ENCODE measurements at regions of chr12 and their contacts with region 1.

Region 1: DNA sequence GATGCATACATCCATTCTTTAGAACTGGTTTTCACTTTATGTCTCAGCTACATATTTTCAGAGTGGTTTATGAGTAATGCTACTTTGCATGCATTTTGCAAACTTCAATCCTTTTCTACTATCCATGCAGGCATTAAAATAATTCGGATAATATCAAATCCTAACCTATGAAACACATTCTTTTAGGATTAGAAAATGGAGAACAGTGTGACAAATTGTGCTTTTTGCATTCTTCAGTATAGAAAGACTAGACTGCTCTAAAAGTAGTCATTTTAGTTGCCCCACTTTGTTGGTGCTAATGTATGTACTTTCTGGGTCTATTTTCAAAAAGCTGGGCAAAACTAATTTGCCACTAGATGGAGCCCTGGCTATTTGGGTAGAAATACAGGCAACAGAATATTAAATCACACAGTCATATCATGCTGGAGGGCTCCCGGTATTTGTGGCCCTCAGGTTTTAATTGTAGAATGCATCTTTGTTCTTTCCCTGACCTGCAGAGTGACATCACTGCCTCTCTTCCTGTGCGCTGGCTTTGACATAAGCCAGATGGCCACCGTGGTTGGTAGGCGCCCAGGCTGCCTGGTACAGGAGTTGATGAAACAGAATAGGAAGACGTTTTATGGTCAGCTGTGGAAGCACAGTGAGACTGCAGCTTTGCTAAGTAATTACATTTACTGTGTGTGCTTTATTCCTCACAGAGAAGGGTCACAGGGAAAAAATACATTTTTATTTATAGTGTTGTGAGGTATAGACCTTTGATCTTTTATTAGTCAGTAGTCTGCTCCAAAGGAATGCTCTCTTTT is 28.1 kb downstream of the MSRB3 start:
- DNase-seq: peak in 2 of 4 experiments; percentile 17 to 43
- ATAC-seq: peak; percentile 69; the same call in 2 of the 3 replicates
- H3K4me3 ChIP-seq: no peak overlapping the region
- H3K27ac ChIP-seq: no peak overlapping the region
- H3K4me1 ChIP-seq: no peaks in the 10 kb centered on the region
- H3K27me3 ChIP-seq: no peaks in the 10 kb centered on the region
- CTCF ChIP-seq: peak; percentile 58 to 73 (median 63); a peak in 5 of 6 replicates
- EP300 ChIP-seq: no peak
- POLR2A ChIP-seq: no peak
- RAD21 ChIP-seq: peak; percentile 76 to 82

Region 2: GRCh38 chr12:65384240-65384639 is 77.7 kb after region 1 on chr12:
- CTCF ChIA-PET with region 1: no interaction called
- POLR2A ChIA-PET with region 1: no interaction called
- in situ Hi-C with region 1: no loop called
- intact Hi-C with region 1: no loop called
- DNase-seq: no peak
- ATAC-seq: no peak
- H3K4me3 ChIP-seq: no peak overlapping the region
- H3K27ac ChIP-seq: no peak overlapping the region
- H3K4me1 ChIP-seq: no peaks in the 10 kb centered on the region
- H3K27me3 ChIP-seq: no peaks in the 10 kb centered on the region
- CTCF ChIP-seq: no peak
- EP300 ChIP-seq: no peak
- POLR2A ChIP-seq: no peak
- RAD21 ChIP-seq: no peak

Region 3: GRCh38 chr12:65986047-65986446 is 679.5 kb after region 1 on chr12:
- CTCF ChIA-PET with region 1: no interaction called
- POLR2A ChIA-PET with region 1: no interaction called
- in situ Hi-C with region 1: no loop called
- intact Hi-C with region 1: loop called (anchors 10 kb)
- DNase-seq: no peak
- ATAC-seq: no peak
- H3K4me3 ChIP-seq: no peak overlapping the region
- H3K27ac ChIP-seq: no peak overlapping the region
- H3K4me1 ChIP-seq: no peaks in the 10 kb centered on the region
- H3K27me3 ChIP-seq: no peaks in the 10 kb centered on the region
- CTCF ChIP-seq: no peak
- EP300 ChIP-seq: no peak
- POLR2A ChIP-seq: no peak
- RAD21 ChIP-seq: no peak

Region 4: DNA sequence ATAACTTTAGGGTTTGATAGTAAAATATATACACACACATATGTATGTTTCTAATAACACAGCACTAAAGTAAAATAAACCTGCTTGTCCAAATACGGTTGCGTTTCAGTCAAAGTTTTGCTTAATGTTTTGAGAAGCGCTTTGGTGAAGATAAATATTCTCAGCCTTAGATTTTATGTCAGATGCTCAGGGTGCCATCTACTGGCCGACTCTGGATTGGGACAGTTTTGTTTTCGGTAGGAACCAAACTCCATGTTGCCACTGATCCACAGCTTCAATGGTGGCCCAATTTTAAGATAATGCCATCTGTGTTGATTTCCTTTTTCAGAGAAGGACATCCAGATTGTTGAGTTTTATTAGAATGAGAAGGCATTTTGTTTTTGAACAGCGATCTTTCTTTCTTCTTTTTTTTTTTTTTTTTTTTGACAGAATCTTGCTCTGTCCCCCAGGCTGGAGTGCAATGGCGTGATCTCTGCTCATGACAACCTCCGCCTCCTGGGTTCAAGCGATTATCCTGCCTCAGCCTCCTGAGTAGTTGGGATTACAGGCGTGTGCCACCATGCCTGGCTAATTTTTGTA is 780.9 kb after region 1 on chr12:
- CTCF ChIA-PET with region 1: no interaction called
- POLR2A ChIA-PET with region 1: no interaction called
- in situ Hi-C with region 1: loop called (anchors 10 kb)
- intact Hi-C with region 1: loop called (anchors 5 kb)
- DNase-seq: peak; percentile 23 to 61 (median 32)
- ATAC-seq: peak; percentile 85
- H3K4me3 ChIP-seq: no peak overlapping the region
- H3K27ac ChIP-seq: no peak overlapping the region
- H3K4me1 ChIP-seq: no peaks in the 10 kb centered on the region
- H3K27me3 ChIP-seq: peaks cover 2 to 8% of the 10 kb centered on the region in 2 experiments; a peak in 1 of 5 replicates
- CTCF ChIP-seq: peak; percentile 64 to 76 (median 73)
- EP300 ChIP-seq: no peak
- POLR2A ChIP-seq: no peak
- RAD21 ChIP-seq: peak; percentile 72 to 74

Region 5: DNA sequence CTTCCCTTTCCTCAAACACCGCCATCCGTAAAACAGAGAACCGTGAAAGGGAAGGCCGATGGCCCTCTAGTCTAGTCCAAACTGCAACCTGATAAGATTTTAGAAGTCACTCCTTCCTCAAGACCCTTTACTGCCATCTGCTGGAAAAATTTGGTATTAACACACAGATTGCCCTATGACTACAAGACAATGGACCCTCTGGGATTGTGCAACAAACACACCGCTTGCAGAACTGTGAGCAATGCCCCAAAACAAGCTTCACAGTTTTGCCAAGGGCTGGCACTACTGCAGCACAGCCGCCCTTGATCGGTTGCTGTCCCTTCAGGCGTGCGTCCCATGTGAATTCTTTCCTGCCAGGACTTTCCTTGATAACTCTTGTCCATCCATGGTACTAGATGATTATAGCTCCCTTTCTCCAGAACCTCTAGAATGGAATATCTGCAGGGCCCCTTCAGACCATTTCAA is 800.9 kb after region 1 on chr12:
- CTCF ChIA-PET with region 1: no interaction called
- POLR2A ChIA-PET with region 1: no interaction called
- in situ Hi-C with region 1: no loop called
- intact Hi-C with region 1: loop called (anchors 5 kb)
- DNase-seq: peak; percentile 69 to 86 (median 73)
- ATAC-seq: peak; percentile 99
- H3K4me3 ChIP-seq: no peak overlapping the region
- H3K27ac ChIP-seq: no peak overlapping the region
- H3K4me1 ChIP-seq: no peaks in the 10 kb centered on the region
- H3K27me3 ChIP-seq: no peaks in the 10 kb centered on the region
- CTCF ChIP-seq: peak; percentile 68 to 74 (median 69)
- EP300 ChIP-seq: no peak
- POLR2A ChIP-seq: no peak
- RAD21 ChIP-seq: peak; percentile 50 to 71

Region 6: GRCh38 chr12:66409195-66409871 is 1102.8 kb after region 1 on chr12:
- CTCF ChIA-PET with region 1: no interaction called
- POLR2A ChIA-PET with region 1: no interaction called
- in situ Hi-C with region 1: loop called (anchors 25 kb)
- intact Hi-C with region 1: no loop called
- DNase-seq: peak in 2 of 4 experiments; percentile 10 to 57
- ATAC-seq: peak; percentile 85
- H3K4me3 ChIP-seq: no peak overlapping the region
- H3K27ac ChIP-seq: no peak overlapping the region
- H3K4me1 ChIP-seq: no peaks in the 10 kb centered on the region
- H3K27me3 ChIP-seq: 0 out of 5 replicates have a peak, but pooled peaks cover 0 to 4% of the 10 kb centered on the region in 2 experiments
- CTCF ChIP-seq: peak; percentile 67 to 76 (median 76)
- EP300 ChIP-seq: no peak
- POLR2A ChIP-seq: no peak
- RAD21 ChIP-seq: peak; percentile 86 to 92

Measured in K562 (cell line).